Tibial artery (tissue), 4 donors: ENCODE measurements at regions of chr21 and their contacts with region 1.

Region 1: GRCh38 chr21:33924079-33924765 is 8.6 kb upstream of the ATP5PO start:
- DNase-seq: peak; percentile 85 to 89
- H3K4me3 ChIP-seq: peak overlapping the region in 1 of 2 donors; percentile 9
- H3K27ac ChIP-seq: peak overlapping the region; percentile 30 to 57
- H3K4me1 ChIP-seq: peaks cover 0 to 12% (median 6%) of the 10 kb centered on the region in 4 donors
- H3K27me3 ChIP-seq: no peaks in the 10 kb centered on the region
- CTCF ChIP-seq: peak; percentile 84 to 97

Region 2: GRCh38 chr21:32082466-32082865 is 1841.8 kb before region 1 on chr21:
- intact Hi-C with region 1: no loop called
- DNase-seq: no peak
- H3K4me3 ChIP-seq: no peak overlapping the region
- H3K27ac ChIP-seq: no peak overlapping the region
- H3K4me1 ChIP-seq: no peaks in the 10 kb centered on the region
- H3K27me3 ChIP-seq: no peaks in the 10 kb centered on the region
- CTCF ChIP-seq: no peak

Region 3: GRCh38 chr21:34351786-34352241 is 427.6 kb after region 1 on chr21:
- intact Hi-C with region 1: loop called (anchors 2 kb)
- DNase-seq: no peak
- H3K4me3 ChIP-seq: no peak overlapping the region
- H3K27ac ChIP-seq: no peak overlapping the region
- H3K4me1 ChIP-seq: peaks cover 0 to 13% (median 9%) of the 10 kb centered on the region in 4 donors
- H3K27me3 ChIP-seq: no peaks in the 10 kb centered on the region
- CTCF ChIP-seq: peak; percentile 82 to 86